ENCODE measurements at regions of chr12 and their contacts with region 1.

Region 1: GRCh38 chr12:117284140-117284539 is 77.3 kb downstream of the NOS1 start:
- DNase-seq: no peak
- ATAC-seq: no peak
- H3K4me3 ChIP-seq: no peak overlapping the region
- H3K27ac ChIP-seq: no peak overlapping the region
- H3K4me1 ChIP-seq: no peaks in the 10 kb centered on the region
- H3K27me3 ChIP-seq: peaks cover 18% of the 10 kb centered on the region; the same call in 1 of the 2 replicates
- CTCF ChIP-seq: no peak

Region 2: DNA sequence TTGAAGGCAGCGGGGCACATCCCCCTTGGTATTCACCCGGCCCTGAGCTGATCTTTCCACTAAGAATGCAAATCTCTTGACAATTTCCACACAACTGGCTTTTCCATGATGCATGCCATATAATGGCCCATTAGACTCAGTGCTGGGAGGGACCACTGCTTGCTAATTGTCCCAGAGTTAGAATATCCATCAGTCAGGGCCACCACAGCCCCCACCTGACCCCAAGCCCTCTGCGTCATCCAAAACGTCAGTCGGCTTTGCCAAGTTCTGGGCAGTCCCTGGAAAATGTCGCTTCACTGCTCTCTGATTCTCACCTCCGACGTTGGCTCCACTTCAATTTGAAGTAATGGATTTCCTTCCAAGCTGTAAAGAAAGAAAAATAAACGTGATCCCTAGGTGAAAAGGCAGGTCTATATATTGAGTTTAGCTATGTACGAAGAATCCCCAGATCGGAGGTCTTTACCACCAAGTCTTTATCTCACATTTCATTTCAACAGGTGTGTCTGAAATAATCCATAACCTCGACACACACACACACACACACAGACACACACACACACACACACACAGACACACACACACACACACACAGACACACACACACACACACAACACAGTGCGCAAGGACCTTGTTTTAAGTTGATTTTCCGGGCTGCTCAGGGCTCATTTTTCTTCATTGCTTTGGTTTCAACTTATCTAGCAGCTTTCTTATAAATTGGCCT is 242.8 kb after region 1 on chr12:
- CTCF ChIA-PET with region 1: no interaction called
- POLR2A ChIA-PET with region 1: interaction called, 13 read pairs
- intact Hi-C with region 1: no loop called
- DNase-seq: no peak
- ATAC-seq: no peak
- H3K4me3 ChIP-seq: no peak overlapping the region
- H3K27ac ChIP-seq: no peak overlapping the region
- H3K4me1 ChIP-seq: no peaks in the 10 kb centered on the region
- H3K27me3 ChIP-seq: no peaks in the 10 kb centered on the region
- CTCF ChIP-seq: no peak

Region 3: DNA sequence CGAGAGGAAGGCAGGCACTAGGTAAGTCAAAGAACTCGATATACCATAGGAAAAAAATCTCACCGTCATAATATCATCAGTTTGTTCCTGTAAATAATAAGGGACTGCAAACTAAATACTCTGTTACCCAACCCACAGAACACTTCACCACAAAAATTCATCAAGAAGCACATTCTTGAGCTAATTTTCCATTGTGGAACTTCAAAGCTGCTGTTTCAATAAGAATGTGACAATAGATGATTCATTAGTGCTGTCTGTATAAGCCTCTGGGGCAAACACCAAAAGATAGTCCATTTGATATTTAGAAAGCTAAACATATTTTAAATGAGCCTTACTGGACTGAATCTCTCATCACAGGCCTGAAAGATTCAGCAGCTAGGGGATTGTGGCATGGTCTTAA is 465.3 kb after region 1 on chr12:
- CTCF ChIA-PET with region 1: no interaction called
- POLR2A ChIA-PET with region 1: no interaction called
- intact Hi-C with region 1: no loop called
- DNase-seq: no peak
- ATAC-seq: no peak; the same call in 1 of the 2 replicates
- H3K4me3 ChIP-seq: no peak overlapping the region
- H3K27ac ChIP-seq: no peak overlapping the region
- H3K4me1 ChIP-seq: no peaks in the 10 kb centered on the region
- H3K27me3 ChIP-seq: no peaks in the 10 kb centered on the region
- CTCF ChIP-seq: no peak